Cardiac septum (tissue), 1 donor: ENCODE measurements at regions of chr2 and their contacts with region 1.

Region 1: DNA sequence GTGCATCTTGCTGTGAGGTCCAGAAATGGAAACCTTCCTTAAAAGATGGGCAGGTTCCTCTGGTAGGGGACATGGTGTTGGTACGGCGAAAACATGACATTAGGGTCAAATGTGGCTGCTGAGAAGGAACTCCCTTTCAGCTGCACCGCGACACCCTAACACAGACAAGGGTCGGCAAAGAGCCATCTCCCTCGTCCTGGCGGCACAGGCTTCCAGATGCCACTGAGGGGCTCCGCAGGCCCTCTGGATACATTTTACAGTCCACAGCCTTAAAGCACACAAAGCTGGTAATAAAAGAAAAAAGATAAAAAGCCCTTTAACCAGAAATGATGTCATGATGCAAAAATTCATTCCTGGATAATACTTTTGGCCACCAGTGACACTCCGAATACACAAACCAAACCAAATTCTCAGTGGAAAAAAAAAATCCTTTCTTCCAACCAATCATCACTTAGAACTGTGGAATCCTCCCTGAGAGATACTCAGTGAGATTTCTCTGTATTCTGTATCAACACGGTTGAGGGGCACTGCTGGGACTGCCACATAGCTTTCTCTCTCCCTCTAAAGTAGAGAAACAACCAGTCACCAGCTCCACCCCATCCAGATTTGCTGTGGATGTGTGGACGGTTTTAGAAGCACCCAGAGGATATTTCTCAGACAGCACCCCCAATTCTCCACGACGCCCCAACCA is 174.8 kb downstream of the HDAC4 start:
- DNase-seq: no peak

Region 2: DNA sequence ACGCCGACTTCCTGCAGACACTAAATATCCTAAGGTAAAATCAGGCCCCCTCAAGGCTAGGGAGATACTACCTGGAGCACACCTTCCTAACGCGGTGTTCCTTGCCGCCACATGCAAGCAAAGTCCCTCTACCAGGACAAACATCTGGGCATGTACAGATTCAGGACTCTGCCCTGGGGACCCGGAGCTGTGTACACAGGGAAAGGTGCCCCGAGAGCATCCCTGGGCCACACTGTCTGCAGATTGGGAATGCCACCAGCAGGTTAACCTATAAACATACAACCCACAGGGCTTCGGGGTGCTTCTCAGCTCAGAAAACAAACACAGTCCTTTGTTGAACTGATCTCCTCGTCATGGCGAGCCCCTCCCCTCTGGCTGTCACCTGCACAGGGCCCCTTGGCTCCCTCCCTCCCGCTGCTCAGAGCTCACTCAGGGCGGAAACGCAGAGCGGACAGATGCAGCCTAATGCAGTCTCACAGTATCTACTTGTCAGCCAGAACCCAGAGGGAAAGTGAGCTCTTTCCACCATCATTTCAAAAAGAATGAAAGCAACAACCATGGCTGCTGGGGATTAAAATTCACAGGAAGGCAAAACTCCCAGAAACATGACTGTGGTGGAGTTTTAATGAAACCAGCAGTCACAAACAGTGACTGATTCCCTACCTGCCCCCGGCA is 44.0 kb before region 1 on chr2:
- intact Hi-C with region 1: no loop called
- DNase-seq: peak; percentile 44

Region 3: GRCh38 chr2:239308661-239309397 is 82.8 kb after region 1 on chr2:
- intact Hi-C with region 1: loop called (anchors 5 kb)
- DNase-seq: peak; percentile 78

Region 4: DNA sequence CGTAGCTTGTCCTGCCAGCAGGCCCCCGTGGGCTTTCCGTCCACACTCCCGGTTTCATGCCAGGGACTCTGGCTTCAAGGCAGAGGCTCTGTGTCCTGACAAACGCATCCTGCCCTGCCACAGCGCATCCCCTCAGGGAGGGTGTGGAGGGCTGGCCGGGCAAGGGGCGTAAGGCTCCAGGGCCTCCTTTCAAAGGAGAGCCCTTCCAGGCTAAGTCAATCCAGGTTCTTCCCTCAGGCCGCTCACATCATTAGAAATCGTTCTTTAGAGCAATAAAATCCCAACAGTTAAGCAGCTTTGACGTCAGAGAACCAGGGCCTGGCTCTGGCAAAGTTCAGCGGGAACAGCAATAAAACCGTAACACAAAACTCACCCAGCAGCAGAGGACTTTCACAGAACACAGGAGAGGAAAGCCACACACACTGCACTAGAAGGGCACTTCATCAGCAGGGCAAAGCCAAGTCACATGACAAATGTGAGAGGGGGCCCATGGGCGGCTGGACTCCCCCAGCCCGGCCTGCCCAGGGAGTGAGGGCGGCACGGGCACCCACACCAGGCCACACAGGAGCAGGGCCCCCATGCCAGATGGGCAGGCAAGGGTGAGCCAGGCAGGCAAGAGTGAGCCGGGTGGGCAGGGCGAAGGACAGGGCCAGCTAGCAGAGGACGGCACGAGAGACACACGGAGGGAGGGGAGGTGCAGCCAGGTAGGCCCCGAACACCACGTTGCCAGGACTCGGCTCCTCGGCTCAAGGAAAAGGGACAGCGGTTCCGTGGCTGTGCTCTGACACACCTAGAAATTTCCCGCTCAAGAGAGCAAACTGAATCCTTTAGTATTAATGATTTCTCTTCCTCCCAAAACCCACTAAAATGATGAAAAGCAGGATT is 122.8 kb after region 1 on chr2:
- intact Hi-C with region 1: no loop called
- DNase-seq: peak; percentile 53